Calu3 (cell line): ENCODE measurements at regions of chr6 and their contacts with region 1.

Region 1: DNA sequence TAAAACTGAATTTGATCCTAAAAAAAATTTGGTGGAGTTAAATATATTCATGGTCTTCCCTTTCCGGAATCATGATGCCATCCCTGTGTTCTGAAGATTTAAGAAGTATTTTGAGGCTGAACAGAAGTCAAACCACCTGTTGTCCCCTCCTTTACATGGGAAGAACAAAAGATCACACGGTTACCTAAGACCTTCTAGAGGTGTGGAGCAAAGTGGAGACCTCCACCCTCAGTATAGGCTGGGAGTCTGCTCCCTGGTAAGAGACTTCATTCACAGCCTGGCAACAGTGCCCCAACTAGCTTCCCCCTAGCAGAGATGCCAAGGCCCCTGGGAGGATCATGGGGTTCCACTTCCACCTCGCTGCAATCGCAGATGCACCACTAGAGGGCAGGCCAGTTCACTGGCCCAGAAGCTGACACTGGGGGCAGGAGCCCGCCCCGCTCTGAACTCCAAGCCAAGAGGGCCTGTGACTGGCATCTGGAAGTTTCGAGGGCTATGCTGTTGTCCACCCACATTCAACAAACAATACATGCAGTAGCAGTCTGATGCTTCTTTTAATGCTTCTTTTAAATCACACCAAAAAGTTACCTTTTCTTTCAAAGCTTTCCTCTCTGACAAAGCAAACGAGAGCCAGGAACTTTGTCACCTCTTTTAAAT is 19.5 kb upstream of the UBE2J1 start:
- DNase-seq: peak; percentile 83
- H3K4me3 Mint-ChIP-seq: no peak overlapping the region
- H3K27ac Mint-ChIP-seq: no peak overlapping the region
- H3K4me1 Mint-ChIP-seq: no peaks in the 10 kb centered on the region
- H3K27me3 Mint-ChIP-seq: no peaks in the 10 kb centered on the region
- CTCF ChIP-seq: peak; percentile 92

Region 2: GRCh38 chr6:89122625-89123024 is 249.4 kb before region 1 on chr6:
- CTCF ChIA-PET with region 1: no interaction called
- intact Hi-C with region 1: loop called (anchors 1 kb)
- DNase-seq: peak; percentile 11
- H3K4me3 Mint-ChIP-seq: no peak overlapping the region
- H3K27ac Mint-ChIP-seq: no peak overlapping the region
- H3K4me1 Mint-ChIP-seq: peaks cover 23% of the 10 kb centered on the region
- H3K27me3 Mint-ChIP-seq: no peaks in the 10 kb centered on the region
- CTCF ChIP-seq: peak; percentile 28

Region 3: GRCh38 chr6:89281779-89282246 is 90.2 kb before region 1 on chr6:
- CTCF ChIA-PET with region 1: no interaction called
- intact Hi-C with region 1: loop called (anchors 5 kb)
- DNase-seq: peak; percentile 52
- H3K4me3 Mint-ChIP-seq: no peak overlapping the region
- H3K27ac Mint-ChIP-seq: no peak overlapping the region
- H3K4me1 Mint-ChIP-seq: no peaks in the 10 kb centered on the region
- H3K27me3 Mint-ChIP-seq: no peaks in the 10 kb centered on the region
- CTCF ChIP-seq: peak; percentile 52

Region 4: DNA sequence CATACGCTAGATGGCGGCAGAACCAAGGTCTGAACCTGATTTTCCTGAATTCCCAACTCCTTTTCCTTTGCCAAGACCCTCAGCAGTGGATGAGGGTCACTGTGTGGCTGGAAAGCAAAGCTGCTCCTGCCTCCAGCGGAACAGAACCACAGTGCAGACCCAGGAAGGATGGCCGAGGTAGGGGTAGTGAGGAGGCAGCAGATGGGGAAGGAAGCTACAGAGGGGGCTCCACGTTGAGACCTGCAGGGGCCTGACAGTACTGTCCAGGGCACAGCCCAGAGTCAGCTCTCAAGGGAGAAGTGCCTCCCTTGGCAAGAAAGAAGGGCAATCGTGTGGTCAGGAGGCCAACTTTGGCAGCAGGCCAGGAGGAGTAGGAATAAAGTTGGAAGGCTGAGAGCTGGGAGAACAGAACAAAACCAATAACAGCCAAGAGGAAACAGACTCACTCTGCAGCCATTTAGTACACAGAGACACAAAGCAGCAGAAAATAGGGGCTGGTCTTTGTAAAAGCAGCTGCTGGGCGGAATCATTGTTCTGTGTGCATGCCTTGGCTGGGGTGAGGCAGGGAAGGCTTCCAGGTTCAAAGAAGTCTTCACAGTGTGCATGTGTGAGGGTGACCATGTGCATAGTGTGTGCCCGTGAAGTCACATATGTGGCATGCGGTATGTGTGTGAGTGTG is 60.0 kb before region 1 on chr6:
- CTCF ChIA-PET with region 1: no interaction called
- intact Hi-C with region 1: loop called (anchors 5 kb)
- DNase-seq: peak; percentile 43
- H3K4me3 Mint-ChIP-seq: peak overlapping the region; percentile 13
- H3K27ac Mint-ChIP-seq: peak overlapping the region; percentile 5
- H3K4me1 Mint-ChIP-seq: peaks cover 28% of the 10 kb centered on the region
- H3K27me3 Mint-ChIP-seq: no peaks in the 10 kb centered on the region
- CTCF ChIP-seq: no peak

Region 5: DNA sequence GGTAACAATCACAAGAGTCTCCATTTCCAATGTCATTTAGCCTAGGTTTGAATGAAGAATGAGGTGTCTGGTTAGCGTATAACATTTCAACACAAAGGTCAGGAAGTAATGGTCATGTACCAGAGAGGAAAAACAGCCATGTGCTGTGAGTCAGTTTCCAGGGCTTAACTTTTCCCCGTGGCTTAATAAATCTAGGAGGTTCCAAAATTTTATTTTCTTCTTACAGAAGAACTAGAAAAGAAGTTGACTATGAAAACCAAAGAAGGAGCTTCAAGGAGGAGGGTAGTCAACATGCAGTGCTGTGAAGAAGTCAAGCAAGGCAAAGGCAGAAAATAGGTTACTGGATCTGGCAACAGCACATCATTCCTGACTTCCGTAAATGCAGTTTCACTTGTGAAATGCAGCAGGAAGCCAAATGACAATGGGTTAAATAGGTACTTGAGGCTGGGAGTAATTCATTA is 48.4 kb before region 1 on chr6:
- CTCF ChIA-PET with region 1: no interaction called
- intact Hi-C with region 1: no loop called
- DNase-seq: no peak
- H3K4me3 Mint-ChIP-seq: no peak overlapping the region
- H3K27ac Mint-ChIP-seq: no peak overlapping the region
- H3K4me1 Mint-ChIP-seq: peaks cover 15% of the 10 kb centered on the region
- H3K27me3 Mint-ChIP-seq: no peaks in the 10 kb centered on the region
- CTCF ChIP-seq: no peak

Region 6: DNA sequence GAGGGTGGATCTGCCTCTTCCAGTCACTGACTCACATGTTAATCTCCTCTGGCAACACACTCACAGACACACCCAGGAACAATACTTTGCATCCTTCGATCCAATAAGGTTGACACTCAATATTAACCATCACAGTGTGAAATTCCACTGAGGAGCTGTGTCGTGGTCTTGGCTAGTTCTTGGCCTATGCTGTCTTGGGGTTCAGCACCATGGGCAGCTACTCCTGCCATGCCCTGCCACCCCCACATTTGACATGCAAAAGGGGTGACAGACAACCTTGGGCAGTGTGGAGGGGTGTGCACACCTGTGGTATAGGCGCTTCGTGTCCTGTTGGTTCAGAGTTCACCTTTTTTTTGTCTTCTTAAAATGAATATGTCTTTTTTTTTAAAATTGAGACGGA is 86.7 kb after region 1 on chr6:
- CTCF ChIA-PET with region 1: no interaction called
- intact Hi-C with region 1: no loop called
- DNase-seq: no peak
- H3K4me3 Mint-ChIP-seq: no peak overlapping the region
- H3K27ac Mint-ChIP-seq: no peak overlapping the region
- H3K4me1 Mint-ChIP-seq: no peaks in the 10 kb centered on the region
- H3K27me3 Mint-ChIP-seq: no peaks in the 10 kb centered on the region
- CTCF ChIP-seq: no peak

Region 7: DNA sequence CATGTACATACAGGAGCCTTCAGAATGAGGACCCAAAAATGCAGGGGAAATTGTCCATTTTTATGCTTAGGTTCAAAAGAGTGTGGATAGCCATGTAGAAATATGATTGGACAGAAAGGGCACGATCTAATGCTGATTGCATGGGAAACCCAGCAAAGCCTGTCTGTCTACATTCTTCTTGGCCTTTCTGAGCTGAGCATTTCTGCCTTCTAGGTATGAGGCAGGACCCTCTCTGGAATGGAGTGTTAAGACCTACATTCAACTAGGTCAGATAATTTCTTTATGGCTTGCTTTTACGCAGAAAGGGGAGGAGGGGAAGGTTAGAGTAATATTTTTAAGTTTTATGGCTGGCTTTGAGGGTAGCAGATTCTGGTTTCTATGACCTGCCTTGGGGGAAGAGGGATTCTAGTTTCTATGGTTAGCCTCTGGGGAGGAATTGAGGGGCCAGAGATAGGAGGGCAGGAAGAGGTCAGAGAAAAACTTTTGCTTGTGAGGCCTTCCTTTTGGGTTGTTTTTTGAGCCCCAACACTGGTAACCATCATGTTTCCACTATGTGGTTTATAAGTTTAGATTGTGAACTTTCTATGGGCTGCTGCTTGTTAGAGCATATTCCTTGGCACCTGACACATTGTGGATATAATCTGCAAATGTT is 203.1 kb after region 1 on chr6:
- CTCF ChIA-PET with region 1: no interaction called
- intact Hi-C with region 1: no loop called
- DNase-seq: peak; percentile 11
- H3K4me3 Mint-ChIP-seq: no peak overlapping the region
- H3K27ac Mint-ChIP-seq: peak overlapping the region; percentile 8
- H3K4me1 Mint-ChIP-seq: peaks cover 9% of the 10 kb centered on the region
- H3K27me3 Mint-ChIP-seq: no peaks in the 10 kb centered on the region
- CTCF ChIP-seq: no peak